ENCODE measurements at regions of chr9 and their contacts with region 1.

Region 1: GRCh38 chr9:34603610-34604231 is 8.2 kb downstream of the RPP25L start:
- DNase-seq: peak; percentile 77
- H3K4me3 ChIP-seq: no peak overlapping the region
- H3K27ac ChIP-seq: no peak overlapping the region
- H3K4me1 ChIP-seq: no peaks in the 10 kb centered on the region
- H3K27me3 ChIP-seq: peaks cover 0 to 10% of the 10 kb centered on the region in 2 experiments
- CTCF ChIP-seq: peak; percentile 85 to 89
- POLR2A ChIP-seq: no peak

Region 2: GRCh38 chr9:34178520-34179212 is 425.1 kb before region 1 on chr9 and contains the start of gene UBAP1:
- CTCF ChIA-PET with region 1: no interaction called
- POLR2A ChIA-PET with region 1: no interaction called
- dilution Hi-C with region 1: no loop called
- intact Hi-C with region 1: no loop called
- DNase-seq: peak; percentile 99
- H3K4me3 ChIP-seq: peak within 1 kb of the TSS; percentile 51 to 87 (median 79)
- H3K27ac ChIP-seq: peak within 1 kb of the TSS; percentile 58
- H3K4me1 ChIP-seq: no peaks in the 10 kb centered on the region
- H3K27me3 ChIP-seq: no peaks in the 10 kb centered on the region
- CTCF ChIP-seq: no peak
- POLR2A ChIP-seq: peak; percentile 64
- total RNA-seq, gene UBAP1: 38.0 and 38.8 TPM in 2 replicates

Region 3: DNA sequence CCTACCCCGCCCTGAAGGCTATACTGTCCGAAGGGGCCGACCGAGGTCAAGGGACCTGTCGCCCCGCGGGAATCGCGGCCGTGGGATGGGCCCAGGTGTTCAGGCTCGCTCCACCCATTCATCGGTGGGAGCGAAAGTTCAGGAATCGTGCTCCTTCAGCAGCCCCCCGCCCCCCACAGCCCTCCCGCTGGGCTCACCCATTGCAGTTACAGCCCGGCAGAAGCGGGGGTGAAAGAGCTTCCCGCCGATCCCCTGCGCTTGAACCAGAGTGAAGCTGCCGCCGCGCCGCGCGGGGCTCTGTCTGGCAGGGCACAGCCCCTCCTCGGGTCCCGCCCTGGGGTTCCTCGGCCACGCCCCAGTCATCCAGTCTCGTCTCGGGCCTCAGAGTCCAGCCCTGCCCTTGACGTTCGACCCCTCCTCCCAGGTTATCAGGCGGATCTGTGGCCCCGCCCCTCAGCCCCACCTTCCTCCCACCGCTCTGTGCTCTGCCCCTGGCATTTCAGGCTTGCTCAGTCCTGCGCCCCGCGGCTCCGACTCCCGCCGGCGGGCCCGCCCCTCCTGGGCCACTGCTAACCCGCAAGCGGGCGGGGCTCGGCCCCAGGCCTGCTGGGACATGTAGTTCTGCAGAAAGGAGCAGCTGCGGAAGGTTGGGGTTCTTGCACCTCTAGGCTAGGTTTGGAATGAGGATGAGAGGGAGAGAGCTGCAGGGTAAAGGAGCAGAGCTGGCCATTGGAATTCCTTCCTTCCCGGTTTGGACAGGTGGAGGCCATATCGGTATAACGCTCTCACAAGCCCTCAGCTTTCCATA is 226.9 kb before region 1 on chr9 and contains the start of gene MYORG:
- CTCF ChIA-PET with region 1: interaction called, 15 read pairs
- POLR2A ChIA-PET with region 1: no interaction called
- dilution Hi-C with region 1: no loop called
- intact Hi-C with region 1: no loop called
- DNase-seq: peak; percentile 84
- H3K4me3 ChIP-seq: peak within 1 kb of the TSS; percentile 44 to 79 (median 65)
- H3K27ac ChIP-seq: no peak within 1 kb of the TSS
- H3K4me1 ChIP-seq: peaks cover 11% of the 10 kb centered on the region
- H3K27me3 ChIP-seq: no peaks in the 10 kb centered on the region
- CTCF ChIP-seq: no peak
- POLR2A ChIP-seq: no peak
- total RNA-seq, gene MYORG: 6.3 and 7.0 TPM in 2 replicates

Region 4: GRCh38 chr9:34437006-34437925 is 166.5 kb before region 1 on chr9:
- CTCF ChIA-PET with region 1: interaction called, 17 read pairs
- POLR2A ChIA-PET with region 1: no interaction called
- dilution Hi-C with region 1: no loop called
- intact Hi-C with region 1: loop called (anchors 1 kb)
- DNase-seq: peak; percentile 83
- H3K4me3 ChIP-seq: no peak overlapping the region
- H3K27ac ChIP-seq: no peak overlapping the region
- H3K4me1 ChIP-seq: peaks cover 18% of the 10 kb centered on the region
- H3K27me3 ChIP-seq: no peaks in the 10 kb centered on the region
- CTCF ChIP-seq: peak; percentile 75 to 77
- POLR2A ChIP-seq: no peak

Region 5: DNA sequence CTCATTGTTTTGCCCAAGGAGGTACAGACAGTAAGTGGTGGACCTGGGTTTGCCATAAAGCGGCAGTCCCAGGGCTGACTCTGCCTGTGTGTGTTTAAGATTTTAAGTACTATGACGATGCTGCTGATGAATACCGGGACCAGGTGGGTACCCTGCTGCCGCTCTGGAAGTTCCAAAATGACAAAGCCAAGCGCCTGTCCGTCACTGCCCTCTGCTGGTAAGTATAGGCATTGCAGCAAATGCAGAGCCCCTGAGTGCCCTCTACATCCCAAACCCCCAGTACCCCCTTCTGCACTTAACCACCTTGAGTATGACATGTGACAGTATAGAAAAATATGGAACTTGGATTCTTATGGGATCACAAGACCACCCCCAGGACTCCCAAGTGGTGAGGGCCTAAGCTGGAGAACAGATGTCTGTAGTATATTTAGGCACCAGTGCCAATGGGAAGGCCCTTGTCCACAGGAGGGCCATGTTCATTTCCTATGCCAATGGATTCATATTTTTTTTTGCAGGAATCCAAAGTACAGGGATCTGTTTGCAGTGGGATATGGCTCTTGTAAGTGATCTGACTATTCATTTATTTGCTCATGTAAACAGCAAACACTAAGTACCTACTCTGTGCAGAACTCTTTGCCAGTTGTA is 103.0 kb before region 1 on chr9:
- CTCF ChIA-PET with region 1: interaction called, 40 read pairs
- POLR2A ChIA-PET with region 1: interaction called, 3 read pairs
- dilution Hi-C with region 1: no loop called
- intact Hi-C with region 1: loop called (anchors 1 kb)
- DNase-seq: peak; percentile 46
- H3K4me3 ChIP-seq: no peak overlapping the region
- H3K27ac ChIP-seq: no peak overlapping the region
- H3K4me1 ChIP-seq: peaks cover 13% of the 10 kb centered on the region
- H3K27me3 ChIP-seq: peaks cover 10 to 17% of the 10 kb centered on the region in 2 experiments
- CTCF ChIP-seq: peak; percentile 85 to 93
- POLR2A ChIP-seq: no peak

Region 6: GRCh38 chr9:34620061-34620994 is 16.6 kb after region 1 on chr9 and contains the start of gene DCTN3:
- CTCF ChIA-PET with region 1: interaction called, 11 read pairs
- POLR2A ChIA-PET with region 1: no interaction called
- dilution Hi-C with region 1: no loop called
- intact Hi-C with region 1: no loop called
- DNase-seq: peak; percentile 91
- H3K4me3 ChIP-seq: peak within 1 kb of the TSS; percentile 68 to 78 (median 70)
- H3K27ac ChIP-seq: no peak within 1 kb of the TSS
- H3K4me1 ChIP-seq: peaks cover 10% of the 10 kb centered on the region
- H3K27me3 ChIP-seq: peaks cover 20 to 24% of the 10 kb centered on the region in 2 experiments
- CTCF ChIP-seq: no peak
- POLR2A ChIP-seq: peak; percentile 55
- total RNA-seq, gene DCTN3: 91.0 and 93.3 TPM in 2 replicates

Region 7: GRCh38 chr9:34654323-34655051 is 50.8 kb after region 1 on chr9:
- CTCF ChIA-PET with region 1: no interaction called
- POLR2A ChIA-PET with region 1: no interaction called
- dilution Hi-C with region 1: no loop called
- intact Hi-C with region 1: no loop called
- DNase-seq: peak; percentile 36
- H3K4me3 ChIP-seq: no peak overlapping the region
- H3K27ac ChIP-seq: no peak overlapping the region
- H3K4me1 ChIP-seq: peaks cover 23% of the 10 kb centered on the region
- H3K27me3 ChIP-seq: no peaks in the 10 kb centered on the region
- CTCF ChIP-seq: no peak
- POLR2A ChIP-seq: no peak

Region 8: DNA sequence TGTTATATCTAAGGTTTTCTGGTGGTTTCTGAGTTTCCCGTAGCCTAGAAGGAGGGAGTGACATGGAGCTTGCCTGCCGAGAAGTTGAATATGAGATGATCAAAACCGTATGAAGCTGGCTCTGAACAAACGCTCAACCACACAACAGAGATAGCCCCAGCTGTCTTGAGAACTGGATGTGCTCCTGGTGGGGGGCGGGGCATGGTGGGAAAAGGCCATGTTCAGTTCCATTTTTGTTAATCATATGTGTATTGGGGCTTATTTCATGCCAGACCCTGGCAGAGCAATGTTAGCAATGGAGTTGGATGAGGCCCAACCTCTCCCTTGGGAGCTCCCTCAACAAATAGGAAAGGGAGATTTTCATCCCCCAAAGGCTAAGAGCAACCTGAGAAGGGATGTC is 82.5 kb after region 1 on chr9:
- CTCF ChIA-PET with region 1: no interaction called
- POLR2A ChIA-PET with region 1: no interaction called
- dilution Hi-C with region 1: no loop called
- intact Hi-C with region 1: no loop called
- DNase-seq: no peak
- H3K4me3 ChIP-seq: no peak overlapping the region
- H3K27ac ChIP-seq: no peak overlapping the region
- H3K4me1 ChIP-seq: no peaks in the 10 kb centered on the region
- H3K27me3 ChIP-seq: peaks cover 4 to 7% of the 10 kb centered on the region in 2 experiments
- CTCF ChIP-seq: no peak
- POLR2A ChIP-seq: no peak